A673 (cell line): ENCODE measurements at regions of chr15 and their contacts with region 1.

Region 1: DNA sequence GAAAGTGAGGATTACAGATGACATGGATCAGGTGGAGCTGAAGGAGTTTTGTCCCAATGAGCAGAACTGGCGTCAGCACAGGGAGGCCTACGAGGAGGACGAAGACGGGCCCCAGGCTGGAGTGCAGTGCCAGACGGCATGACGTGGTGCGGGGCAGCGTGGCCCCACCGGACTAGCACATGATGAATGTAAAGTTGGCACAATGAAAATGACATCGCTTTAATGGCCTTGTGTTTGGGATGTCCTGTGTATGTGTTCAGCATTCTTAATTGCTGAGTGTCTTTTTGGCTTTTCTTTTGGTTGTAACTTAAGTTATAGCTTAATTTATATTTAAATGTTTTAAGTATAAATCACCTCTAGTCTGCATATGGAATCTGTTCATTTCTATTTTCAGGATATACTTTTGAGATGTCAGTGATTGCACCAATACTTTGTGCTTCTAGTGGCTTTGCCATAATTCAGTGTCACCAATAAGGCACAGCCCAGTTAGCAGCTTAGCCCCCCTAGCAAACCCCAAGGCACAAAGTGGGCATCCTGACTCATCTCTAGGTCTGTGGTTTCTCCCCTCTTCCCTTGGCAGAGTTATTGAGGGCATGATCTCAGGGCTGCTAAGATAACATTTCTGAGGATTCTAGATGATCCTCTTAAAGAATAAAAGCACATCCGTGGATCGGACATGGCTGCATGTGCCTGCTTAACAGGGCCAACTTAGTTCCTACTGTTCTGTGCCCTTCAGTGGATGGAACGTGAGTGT is 16.1 kb downstream of the DNAJA4 start:
- DNase-seq: no peak
- H3K4me3 ChIP-seq: no peak overlapping the region
- H3K27ac ChIP-seq: no peak overlapping the region
- H3K4me1 ChIP-seq: no peaks in the 10 kb centered on the region
- H3K27me3 ChIP-seq: no peaks in the 10 kb centered on the region
- CTCF ChIP-seq: no peak

Region 2: DNA sequence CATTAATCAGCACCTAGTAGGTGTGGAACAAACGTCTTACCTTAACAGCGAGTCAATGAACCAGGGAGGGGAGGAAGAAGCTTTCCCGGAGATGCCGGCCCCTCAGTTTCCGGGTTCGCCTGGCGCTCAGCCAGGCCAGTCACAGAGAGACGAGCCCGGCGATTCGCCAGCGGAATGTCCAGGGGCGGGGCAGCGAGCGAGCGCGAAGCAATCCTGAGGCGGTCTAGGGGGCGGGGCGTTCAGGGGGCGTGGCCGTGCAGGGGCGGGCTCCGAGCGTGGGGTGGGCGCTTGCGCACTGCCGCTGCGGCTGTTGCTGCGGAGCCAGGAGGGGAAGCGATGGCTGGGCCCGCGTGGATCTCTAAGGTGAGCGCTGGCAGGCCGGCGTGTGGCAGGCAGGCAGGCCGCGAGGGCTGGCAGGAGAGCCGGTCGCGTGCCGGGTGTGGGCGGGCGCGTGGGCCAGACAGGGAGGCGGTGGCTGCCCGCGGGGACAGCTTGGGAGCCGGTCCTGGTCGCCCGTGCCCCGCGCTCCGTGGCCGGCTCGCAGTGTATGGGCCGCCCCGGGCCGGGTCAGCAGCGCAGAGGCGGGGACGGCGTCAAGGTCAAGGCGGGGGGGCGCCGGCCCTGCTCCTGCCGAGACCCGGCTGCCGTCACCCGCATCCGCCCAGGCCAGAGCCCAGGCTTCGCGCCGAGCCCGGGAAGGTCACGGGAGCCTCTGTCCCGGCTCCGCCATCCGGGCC is 131.3 kb before region 1 on chr15 and contains the start of gene IDH3A:
- CTCF ChIA-PET with region 1: no interaction called
- POLR2A ChIA-PET with region 1: interaction called, 11 read pairs
- intact Hi-C with region 1: no loop called
- DNase-seq: peak; percentile 98
- H3K4me3 ChIP-seq: peak within 1 kb of the TSS; percentile 80
- H3K27ac ChIP-seq: peak within 1 kb of the TSS; percentile 45
- H3K4me1 ChIP-seq: peaks cover 12% of the 10 kb centered on the region
- H3K27me3 ChIP-seq: no peaks in the 10 kb centered on the region
- CTCF ChIP-seq: no peak
- total RNA-seq, gene IDH3A: 83.8 and 112 TPM in 2 replicates

Region 3: GRCh38 chr15:78329625-78330024 is 49.1 kb after region 1 on chr15:
- CTCF ChIA-PET with region 1: no interaction called
- POLR2A ChIA-PET with region 1: no interaction called
- intact Hi-C with region 1: no loop called
- DNase-seq: no peak
- H3K4me3 ChIP-seq: no peak overlapping the region
- H3K27ac ChIP-seq: no peak overlapping the region
- H3K4me1 ChIP-seq: no peaks in the 10 kb centered on the region
- H3K27me3 ChIP-seq: no peaks in the 10 kb centered on the region
- CTCF ChIP-seq: no peak